ENCODE measurements at regions of chr1 and their contacts with region 1.

Region 1: DNA sequence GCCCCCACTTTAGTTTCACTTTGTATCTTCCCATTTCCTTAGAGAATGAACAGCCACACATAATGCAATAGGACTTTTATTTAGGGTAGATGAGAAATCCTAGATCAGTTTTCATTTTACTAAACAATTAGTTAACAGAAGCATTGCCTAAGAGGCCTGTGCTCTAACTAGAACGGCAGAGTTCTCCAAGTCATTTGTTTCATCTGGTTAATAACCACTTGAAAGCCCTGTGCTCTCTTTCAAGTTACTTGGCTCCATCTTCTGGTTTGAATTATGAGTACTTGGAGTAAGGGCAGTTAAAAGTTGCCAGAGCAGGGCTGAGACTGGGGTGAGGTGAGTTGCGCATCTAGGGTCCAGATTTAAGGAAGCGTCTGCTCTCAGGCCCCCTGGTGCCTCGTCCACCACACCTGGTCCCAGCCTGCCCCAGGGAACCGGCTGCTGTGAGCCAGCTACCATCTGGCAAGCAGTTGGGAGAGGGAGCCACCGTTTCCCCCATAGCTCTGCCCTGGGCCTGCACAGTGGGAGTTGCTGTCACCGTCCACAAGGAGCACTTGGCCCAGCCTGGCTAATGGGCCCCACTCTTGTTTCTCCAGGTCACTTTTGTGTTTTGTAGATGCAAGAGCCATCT is 18.1 kb upstream of the SLC44A3 start:
- DNase-seq: peak; percentile 38
- H3K4me3 Mint-ChIP-seq: peak overlapping the region; percentile 48
- H3K27ac Mint-ChIP-seq: peak overlapping the region; percentile 80
- H3K4me1 Mint-ChIP-seq: peaks cover 72% of the 10 kb centered on the region
- H3K27me3 Mint-ChIP-seq: no peaks in the 10 kb centered on the region
- CTCF ChIP-seq: peak; percentile 47

Region 2: GRCh38 chr1:94481473-94481933 is 320.5 kb before region 1 on chr1:
- CTCF ChIA-PET with region 1: interaction called, 4 read pairs
- intact Hi-C with region 1: loop called (anchors 1 kb)
- DNase-seq: peak; percentile 61
- H3K4me3 Mint-ChIP-seq: no peak overlapping the region
- H3K27ac Mint-ChIP-seq: no peak overlapping the region
- H3K4me1 Mint-ChIP-seq: peaks cover 15% of the 10 kb centered on the region
- H3K27me3 Mint-ChIP-seq: no peaks in the 10 kb centered on the region
- CTCF ChIP-seq: peak; percentile 69

Region 3: GRCh38 chr1:94522304-94522703 is 279.7 kb before region 1 on chr1:
- CTCF ChIA-PET with region 1: interaction called, 18 read pairs
- intact Hi-C with region 1: loop called (anchors 1 kb)
- DNase-seq: peak; percentile 17
- H3K4me3 Mint-ChIP-seq: no peak overlapping the region
- H3K27ac Mint-ChIP-seq: no peak overlapping the region
- H3K4me1 Mint-ChIP-seq: peaks cover 30% of the 10 kb centered on the region
- H3K27me3 Mint-ChIP-seq: no peaks in the 10 kb centered on the region
- CTCF ChIP-seq: no peak

Region 4: DNA sequence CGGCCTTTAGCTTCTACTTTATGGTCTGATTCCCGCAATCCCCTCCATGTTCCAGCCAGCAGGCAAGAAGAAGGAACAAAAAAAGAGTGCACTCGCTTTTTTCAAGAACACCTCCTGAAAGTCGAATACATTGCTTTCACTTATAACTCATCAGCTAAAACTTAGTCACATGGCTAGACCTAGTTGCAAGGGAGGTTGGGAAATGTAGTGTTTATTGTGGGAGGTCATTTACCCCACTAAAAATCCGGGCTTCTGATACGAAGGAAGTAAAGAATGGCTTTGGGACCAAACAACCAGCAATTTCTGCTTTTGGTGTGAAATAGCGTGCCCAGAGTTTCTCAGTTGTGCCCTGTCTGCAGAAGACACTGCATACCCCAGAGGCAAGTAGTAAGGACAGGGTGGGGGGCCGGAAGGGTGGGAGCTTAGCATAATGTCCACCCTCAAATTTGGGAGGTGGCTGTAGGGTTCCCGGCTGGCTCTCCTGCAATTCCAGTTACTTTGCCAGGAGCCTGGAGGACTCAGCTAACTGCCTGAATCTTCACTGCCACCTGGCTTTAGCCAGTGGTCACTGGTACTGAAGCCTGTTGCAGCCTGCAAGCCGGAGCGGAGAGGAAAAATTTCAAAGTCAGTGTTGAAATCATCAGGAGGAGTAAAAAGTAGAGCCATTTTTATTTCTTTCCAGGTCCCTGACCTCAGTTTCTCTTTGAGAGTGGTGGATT is 202.8 kb before region 1 on chr1:
- CTCF ChIA-PET with region 1: interaction called, 3 read pairs
- intact Hi-C with region 1: loop called (anchors 5 kb)
- DNase-seq: peak; percentile 55
- H3K4me3 Mint-ChIP-seq: no peak overlapping the region
- H3K27ac Mint-ChIP-seq: peak overlapping the region; percentile 72
- H3K4me1 Mint-ChIP-seq: peaks cover 68% of the 10 kb centered on the region
- H3K27me3 Mint-ChIP-seq: no peaks in the 10 kb centered on the region
- CTCF ChIP-seq: peak; percentile 22

Region 5: GRCh38 chr1:94634977-94635416 is 167.0 kb before region 1 on chr1:
- CTCF ChIA-PET with region 1: no interaction called
- intact Hi-C with region 1: no loop called
- DNase-seq: no peak
- H3K4me3 Mint-ChIP-seq: no peak overlapping the region
- H3K27ac Mint-ChIP-seq: no peak overlapping the region
- H3K4me1 Mint-ChIP-seq: peaks cover 6% of the 10 kb centered on the region
- H3K27me3 Mint-ChIP-seq: no peaks in the 10 kb centered on the region
- CTCF ChIP-seq: no peak

Region 6: GRCh38 chr1:94648225-94649007 is 153.6 kb before region 1 on chr1:
- CTCF ChIA-PET with region 1: no interaction called
- intact Hi-C with region 1: loop called (anchors 5 kb)
- DNase-seq: peak; percentile 75
- H3K4me3 Mint-ChIP-seq: peak overlapping the region; percentile 7
- H3K27ac Mint-ChIP-seq: no peak overlapping the region
- H3K4me1 Mint-ChIP-seq: peaks cover 28% of the 10 kb centered on the region
- H3K27me3 Mint-ChIP-seq: no peaks in the 10 kb centered on the region
- CTCF ChIP-seq: no peak

Region 7: GRCh38 chr1:95304803-95305202 is 502.8 kb after region 1 on chr1:
- CTCF ChIA-PET with region 1: no interaction called
- intact Hi-C with region 1: no loop called
- DNase-seq: peak; percentile 25
- H3K4me3 Mint-ChIP-seq: no peak overlapping the region
- H3K27ac Mint-ChIP-seq: no peak overlapping the region
- H3K4me1 Mint-ChIP-seq: peaks cover 12% of the 10 kb centered on the region
- H3K27me3 Mint-ChIP-seq: no peaks in the 10 kb centered on the region
- CTCF ChIP-seq: no peak